MCF 10A (cell line): ENCODE measurements at regions of chr5 and their contacts with region 1.

Region 1: GRCh38 chr5:137778772-137779564 is 24.8 kb upstream of the HNRNPA0 start:
- DNase-seq: peak; percentile 82
- H3K4me3 Mint-ChIP-seq: no peak overlapping the region
- H3K27ac Mint-ChIP-seq: no peak overlapping the region
- H3K4me1 Mint-ChIP-seq: no peaks in the 10 kb centered on the region
- H3K27me3 Mint-ChIP-seq: peaks cover 24% of the 10 kb centered on the region
- CTCF ChIP-seq: peak; percentile 86

Region 2: DNA sequence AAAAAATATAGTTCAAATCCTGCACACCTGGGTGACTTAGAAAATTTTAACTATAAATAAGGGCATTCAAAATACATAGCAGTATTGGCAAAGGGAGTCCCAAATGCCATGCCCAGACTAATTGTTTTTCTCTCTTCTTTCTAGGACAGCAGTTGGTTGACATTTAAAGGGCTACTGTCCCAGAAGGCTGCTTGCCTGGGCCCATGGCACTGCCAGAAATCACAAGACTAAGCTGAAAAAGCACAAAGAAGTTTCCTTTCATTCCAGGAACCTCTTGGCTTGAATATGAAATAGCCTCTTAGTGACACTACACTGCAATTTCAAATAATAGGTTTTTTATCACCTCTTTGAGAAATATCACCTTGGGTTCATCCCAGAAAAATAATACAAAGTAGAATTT is 1024.8 kb before region 1 on chr5:
- CTCF ChIA-PET with region 1: no interaction called
- POLR2A ChIA-PET with region 1: no interaction called
- intact Hi-C with region 1: no loop called
- DNase-seq: no peak
- H3K4me3 Mint-ChIP-seq: no peak overlapping the region
- H3K27ac Mint-ChIP-seq: no peak overlapping the region
- H3K4me1 Mint-ChIP-seq: no peaks in the 10 kb centered on the region
- H3K27me3 Mint-ChIP-seq: peaks cover 61% of the 10 kb centered on the region
- CTCF ChIP-seq: no peak

Region 3: DNA sequence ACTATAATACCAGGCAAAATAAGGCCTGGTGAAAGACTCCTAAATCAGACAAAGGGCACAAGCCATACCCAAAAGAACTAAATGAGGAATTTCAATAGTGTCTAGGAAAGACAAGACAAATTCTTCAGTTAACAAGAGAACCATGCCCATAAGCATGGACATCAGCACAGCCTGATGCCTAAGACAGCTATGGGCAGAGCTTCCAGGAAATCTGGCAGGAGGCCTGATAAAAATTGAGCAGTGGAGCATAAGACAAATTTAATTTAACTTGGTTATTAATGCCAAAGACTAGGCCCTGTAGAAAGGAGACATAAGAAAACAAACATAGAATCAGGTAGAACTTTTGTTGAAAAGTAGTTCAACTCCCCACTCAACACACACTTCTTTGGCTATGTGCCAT is 60.4 kb before region 1 on chr5:
- CTCF ChIA-PET with region 1: no interaction called
- POLR2A ChIA-PET with region 1: no interaction called
- intact Hi-C with region 1: no loop called
- DNase-seq: no peak
- H3K4me3 Mint-ChIP-seq: no peak overlapping the region
- H3K27ac Mint-ChIP-seq: no peak overlapping the region
- H3K4me1 Mint-ChIP-seq: no peaks in the 10 kb centered on the region
- H3K27me3 Mint-ChIP-seq: peaks cover 21% of the 10 kb centered on the region
- CTCF ChIP-seq: no peak

Region 4: DNA sequence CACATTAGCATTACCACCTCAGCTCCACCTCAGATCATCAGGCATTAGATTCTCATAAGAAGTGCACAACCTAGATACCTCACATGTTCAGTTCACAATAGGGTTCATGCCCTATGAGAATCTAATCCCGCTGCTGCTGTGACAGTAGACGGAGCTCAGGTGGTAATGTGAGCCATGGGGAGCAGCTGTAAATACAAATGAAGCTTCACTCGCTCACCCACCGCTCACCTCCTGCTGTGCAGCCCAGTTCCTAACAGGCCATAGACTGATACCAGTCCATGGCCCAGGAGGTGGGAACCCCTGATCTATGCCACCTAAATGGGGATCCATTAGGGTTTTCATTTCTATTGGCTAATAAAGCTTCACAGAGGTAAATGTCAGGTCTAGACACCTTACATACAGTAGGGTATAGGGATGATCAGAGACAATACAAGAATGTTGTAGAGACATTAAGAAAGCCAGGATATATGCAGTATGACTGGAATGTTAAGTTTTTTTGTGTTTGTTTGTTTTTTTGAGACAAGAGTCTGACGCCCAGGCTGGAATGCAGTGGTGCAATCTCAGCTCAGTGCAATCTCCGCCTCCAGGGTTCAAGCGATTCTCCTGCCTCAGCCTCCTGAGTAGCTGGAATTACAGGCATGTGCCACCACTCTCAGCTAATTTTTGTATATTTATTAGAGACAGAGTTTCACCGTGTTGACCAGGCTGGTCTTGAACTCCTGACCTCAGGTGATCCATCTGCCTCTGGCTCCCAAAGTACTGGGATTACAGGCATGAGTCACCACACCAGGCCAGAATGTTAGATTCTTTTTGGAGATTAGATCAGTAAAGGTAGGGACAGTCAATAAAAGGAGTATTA is 18.4 kb before region 1 on chr5:
- CTCF ChIA-PET with region 1: interaction called, 35 read pairs
- POLR2A ChIA-PET with region 1: interaction called, 4 read pairs
- intact Hi-C with region 1: no loop called
- DNase-seq: peak; percentile 29
- H3K4me3 Mint-ChIP-seq: no peak overlapping the region
- H3K27ac Mint-ChIP-seq: no peak overlapping the region
- H3K4me1 Mint-ChIP-seq: peaks cover 27% of the 10 kb centered on the region
- H3K27me3 Mint-ChIP-seq: no peaks in the 10 kb centered on the region
- CTCF ChIP-seq: no peak

Region 5: GRCh38 chr5:137815202-137815985 is 36.4 kb after region 1 on chr5:
- CTCF ChIA-PET with region 1: interaction called, 39 read pairs
- POLR2A ChIA-PET with region 1: interaction called, 3 read pairs
- intact Hi-C with region 1: no loop called
- DNase-seq: no peak
- H3K4me3 Mint-ChIP-seq: no peak overlapping the region
- H3K27ac Mint-ChIP-seq: no peak overlapping the region
- H3K4me1 Mint-ChIP-seq: no peaks in the 10 kb centered on the region
- H3K27me3 Mint-ChIP-seq: peaks cover 32% of the 10 kb centered on the region
- CTCF ChIP-seq: no peak

Region 6: DNA sequence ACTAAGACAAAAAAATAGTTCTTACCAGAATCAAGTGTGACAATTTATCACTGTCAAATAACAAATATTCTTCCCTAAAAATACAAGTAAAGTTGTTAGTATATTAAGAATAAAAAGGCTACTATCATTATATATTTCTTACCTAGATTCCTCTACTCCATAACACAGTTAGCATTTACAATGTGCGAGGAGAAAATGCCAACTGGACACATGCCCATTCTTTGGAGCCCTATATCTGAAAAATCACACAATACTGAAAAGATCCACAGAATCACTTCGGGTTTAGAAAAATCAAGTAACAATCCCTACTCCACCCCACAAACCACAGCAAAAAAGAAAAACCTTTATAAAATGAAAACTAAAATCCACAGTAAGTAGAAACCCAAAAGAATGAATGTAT is 181.2 kb after region 1 on chr5:
- CTCF ChIA-PET with region 1: interaction called, 36 read pairs
- POLR2A ChIA-PET with region 1: no interaction called
- intact Hi-C with region 1: no loop called
- DNase-seq: no peak
- H3K4me3 Mint-ChIP-seq: no peak overlapping the region
- H3K27ac Mint-ChIP-seq: no peak overlapping the region
- H3K4me1 Mint-ChIP-seq: no peaks in the 10 kb centered on the region
- H3K27me3 Mint-ChIP-seq: no peaks in the 10 kb centered on the region
- CTCF ChIP-seq: no peak

Region 7: GRCh38 chr5:138077065-138077696 is 298.2 kb after region 1 on chr5:
- CTCF ChIA-PET with region 1: interaction called, 25 read pairs
- POLR2A ChIA-PET with region 1: no interaction called
- intact Hi-C with region 1: no loop called
- DNase-seq: peak; percentile 82
- H3K4me3 Mint-ChIP-seq: no peak overlapping the region
- H3K27ac Mint-ChIP-seq: no peak overlapping the region
- H3K4me1 Mint-ChIP-seq: no peaks in the 10 kb centered on the region
- H3K27me3 Mint-ChIP-seq: no peaks in the 10 kb centered on the region
- CTCF ChIP-seq: peak; percentile 95

Region 8: DNA sequence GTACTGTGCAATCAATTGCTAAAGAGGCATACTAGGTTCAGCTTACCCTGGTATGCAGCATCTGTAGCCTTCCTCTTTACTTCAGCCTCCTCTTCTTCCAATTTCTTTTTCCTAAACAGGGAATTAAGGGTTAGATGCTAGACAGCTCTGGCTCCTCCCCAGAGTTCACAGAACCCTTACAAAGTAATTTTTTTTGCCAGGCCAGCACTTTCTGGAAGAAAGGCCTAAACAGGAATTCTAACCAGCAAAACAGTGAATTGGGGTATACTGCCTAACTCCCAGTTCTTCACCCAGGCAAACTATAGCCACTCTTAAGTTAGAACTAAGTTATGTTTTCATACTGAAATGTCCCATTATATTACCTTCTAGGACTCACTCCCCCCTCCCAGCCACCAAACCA is 391.3 kb after region 1 on chr5:
- CTCF ChIA-PET with region 1: no interaction called
- POLR2A ChIA-PET with region 1: no interaction called
- intact Hi-C with region 1: no loop called
- DNase-seq: no peak
- H3K4me3 Mint-ChIP-seq: no peak overlapping the region
- H3K27ac Mint-ChIP-seq: no peak overlapping the region
- H3K4me1 Mint-ChIP-seq: peaks cover 6% of the 10 kb centered on the region
- H3K27me3 Mint-ChIP-seq: no peaks in the 10 kb centered on the region
- CTCF ChIP-seq: no peak